A673 (cell line): ENCODE measurements at regions of chr15 and their contacts with region 1.

Region 1: DNA sequence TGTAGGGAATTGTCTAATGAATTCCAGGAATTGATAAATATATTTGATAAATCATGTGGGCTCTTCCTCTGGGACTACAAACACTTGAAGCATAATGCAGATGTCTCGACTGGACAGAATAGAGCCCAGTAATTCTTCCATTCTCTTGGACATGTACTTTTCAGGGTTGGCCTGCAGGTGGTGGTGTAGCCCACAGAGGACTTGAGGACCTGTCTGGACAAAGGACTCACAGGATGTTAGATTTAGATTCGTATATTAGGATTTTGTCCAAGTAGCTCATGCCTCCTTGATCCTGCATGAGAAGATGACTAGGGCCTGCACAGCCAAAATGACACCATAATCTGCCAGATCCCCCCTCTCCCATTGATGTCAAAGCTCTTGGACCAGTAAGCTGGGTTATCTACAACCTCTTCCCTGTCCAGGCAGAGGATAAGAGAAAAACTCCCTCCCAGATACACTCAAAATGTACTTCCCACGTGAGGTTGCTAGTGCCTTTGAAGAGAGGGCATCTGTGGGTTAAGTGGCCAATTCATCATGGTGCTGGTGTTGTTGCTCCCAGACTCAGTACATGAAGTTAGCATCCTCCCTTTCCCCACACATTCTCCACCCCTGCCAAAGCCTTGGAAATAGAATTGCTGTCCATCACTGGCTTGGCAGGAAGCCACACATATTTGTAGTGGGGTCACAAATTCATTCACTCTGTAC is 88.6 kb upstream of the ZNF280D start:
- DNase-seq: peak; percentile 77
- H3K4me3 ChIP-seq: no peak overlapping the region
- H3K27ac ChIP-seq: no peak overlapping the region
- H3K4me1 ChIP-seq: peaks cover 39% of the 10 kb centered on the region
- H3K27me3 ChIP-seq: no peaks in the 10 kb centered on the region
- CTCF ChIP-seq: peak; percentile 73

Region 2: GRCh38 chr15:55942332-55942731 is 879.5 kb before region 1 on chr15:
- CTCF ChIA-PET with region 1: no interaction called
- POLR2A ChIA-PET with region 1: no interaction called
- intact Hi-C with region 1: no loop called
- DNase-seq: no peak
- H3K4me3 ChIP-seq: no peak overlapping the region
- H3K27ac ChIP-seq: no peak overlapping the region
- H3K4me1 ChIP-seq: no peaks in the 10 kb centered on the region
- H3K27me3 ChIP-seq: no peaks in the 10 kb centered on the region
- CTCF ChIP-seq: no peak

Region 3: GRCh38 chr15:56471440-56472069 is 350.3 kb before region 1 on chr15:
- CTCF ChIA-PET with region 1: no interaction called
- POLR2A ChIA-PET with region 1: no interaction called
- intact Hi-C with region 1: no loop called
- DNase-seq: no peak
- H3K4me3 ChIP-seq: no peak overlapping the region
- H3K27ac ChIP-seq: no peak overlapping the region
- H3K4me1 ChIP-seq: peaks cover 10% of the 10 kb centered on the region
- H3K27me3 ChIP-seq: no peaks in the 10 kb centered on the region
- CTCF ChIP-seq: no peak

Region 4: GRCh38 chr15:56984681-56985481 is 163.0 kb after region 1 on chr15:
- CTCF ChIA-PET with region 1: interaction called, 3 read pairs
- POLR2A ChIA-PET with region 1: no interaction called
- intact Hi-C with region 1: loop called (anchors 5 kb)
- DNase-seq: peak; percentile 92
- H3K4me3 ChIP-seq: peak overlapping the region; percentile 5
- H3K27ac ChIP-seq: peak overlapping the region; percentile 81
- H3K4me1 ChIP-seq: peaks cover 99% of the 10 kb centered on the region
- H3K27me3 ChIP-seq: no peaks in the 10 kb centered on the region
- CTCF ChIP-seq: no peak

Region 5: DNA sequence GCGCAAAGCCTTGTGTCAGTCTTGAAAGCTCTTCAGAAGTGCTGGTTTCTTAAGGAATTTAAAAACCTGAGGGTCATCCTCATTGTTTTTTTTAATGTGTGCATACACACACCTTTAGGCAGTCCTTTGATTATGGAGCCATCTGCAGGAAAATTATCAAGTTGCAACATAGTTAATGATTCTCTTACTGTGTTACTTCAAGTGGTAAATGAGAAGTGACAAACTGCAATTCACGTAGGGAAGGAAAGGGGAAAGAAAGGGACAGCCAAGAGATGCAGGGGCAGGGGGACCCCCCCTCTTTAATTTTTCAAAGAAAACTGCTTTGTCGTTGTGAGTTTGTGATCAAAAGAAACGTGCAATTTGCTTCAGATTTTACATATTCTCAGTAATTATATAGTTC is 392.0 kb after region 1 on chr15:
- CTCF ChIA-PET with region 1: no interaction called
- POLR2A ChIA-PET with region 1: no interaction called
- intact Hi-C with region 1: loop called (anchors 10 kb)
- DNase-seq: peak; percentile 85
- H3K4me3 ChIP-seq: peak overlapping the region; percentile 18
- H3K27ac ChIP-seq: peak overlapping the region; percentile 54
- H3K4me1 ChIP-seq: peaks cover 74% of the 10 kb centered on the region
- H3K27me3 ChIP-seq: no peaks in the 10 kb centered on the region
- CTCF ChIP-seq: peak; percentile 67

Region 6: DNA sequence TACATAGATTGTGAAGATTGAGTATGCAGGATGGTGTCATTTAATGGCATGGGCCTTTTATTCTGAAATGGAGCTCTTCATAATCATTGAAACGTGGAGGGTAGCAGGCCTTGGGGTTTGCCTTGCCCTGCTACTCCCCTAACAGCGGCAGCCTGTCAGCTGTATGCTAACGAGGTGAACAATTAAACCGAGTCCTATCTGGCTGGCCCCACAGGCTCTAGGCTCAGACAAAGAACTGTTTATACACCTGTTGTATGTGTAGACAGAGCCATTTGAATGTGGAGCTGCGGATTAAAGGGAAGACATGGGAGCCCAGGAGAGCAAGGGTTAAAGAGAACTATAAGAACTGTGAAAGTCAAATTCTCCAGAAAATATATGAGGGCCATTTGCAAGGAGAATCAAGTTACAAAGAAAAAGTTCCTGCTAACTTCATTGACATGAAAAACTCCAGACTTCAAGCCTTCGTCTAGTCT is 437.7 kb after region 1 on chr15:
- CTCF ChIA-PET with region 1: no interaction called
- POLR2A ChIA-PET with region 1: no interaction called
- intact Hi-C with region 1: no loop called
- DNase-seq: peak; percentile 83
- H3K4me3 ChIP-seq: peak overlapping the region; percentile 13
- H3K27ac ChIP-seq: peak overlapping the region; percentile 45
- H3K4me1 ChIP-seq: peaks cover 33% of the 10 kb centered on the region
- H3K27me3 ChIP-seq: no peaks in the 10 kb centered on the region
- CTCF ChIP-seq: no peak